RWPE1 (cell line): ENCODE measurements at regions of chr16 and their contacts with region 1.

Region 1: GRCh38 chr16:27745348-27745747 is 195.4 kb downstream of the KATNIP start:
- DNase-seq: no peak
- H3K27ac ChIP-seq: no peak overlapping the region
- CTCF ChIP-seq: no peak

Region 2: GRCh38 chr16:27718201-27719105 is 26.9 kb before region 1 on chr16:
- CTCF ChIA-PET with region 1: no interaction called
- POLR2A ChIA-PET with region 1: no interaction called
- DNase-seq: no peak
- H3K27ac ChIP-seq: no peak overlapping the region
- CTCF ChIP-seq: no peak

Region 3: GRCh38 chr16:27759301-27759871 is 14.0 kb after region 1 on chr16:
- CTCF ChIA-PET with region 1: no interaction called
- POLR2A ChIA-PET with region 1: interaction called, 11 read pairs
- DNase-seq: peak; percentile 40
- H3K27ac ChIP-seq: no peak overlapping the region
- CTCF ChIP-seq: no peak

Region 4: GRCh38 chr16:27816561-27816960 is 71.2 kb after region 1 on chr16:
- CTCF ChIA-PET with region 1: no interaction called
- POLR2A ChIA-PET with region 1: interaction called, 12 read pairs
- DNase-seq: no peak
- H3K27ac ChIP-seq: no peak overlapping the region
- CTCF ChIP-seq: no peak